ENCODE measurements at regions of chr12 and their contacts with region 1.

Region 1: GRCh38 chr12:64660237-64661018 is 50.1 kb downstream of the RASSF3 start:
- DNase-seq: no peak
- H3K4me3 Mint-ChIP-seq: no peak overlapping the region
- H3K27ac Mint-ChIP-seq: peak overlapping the region; percentile 17
- H3K4me1 Mint-ChIP-seq: peaks cover 54% of the 10 kb centered on the region
- H3K27me3 Mint-ChIP-seq: no peaks in the 10 kb centered on the region

Region 2: GRCh38 chr12:64679487-64679983 is 19.1 kb after region 1 on chr12:
- intact Hi-C with region 1: loop called (anchors 2 kb)
- DNase-seq: peak; percentile 87
- H3K4me3 Mint-ChIP-seq: peak overlapping the region; percentile 63
- H3K27ac Mint-ChIP-seq: peak overlapping the region; percentile 78
- H3K4me1 Mint-ChIP-seq: peaks cover 80% of the 10 kb centered on the region
- H3K27me3 Mint-ChIP-seq: no peaks in the 10 kb centered on the region

Region 3: GRCh38 chr12:64780531-64781279 is 120.3 kb after region 1 on chr12:
- intact Hi-C with region 1: no loop called
- DNase-seq: peak; percentile 69
- H3K4me3 Mint-ChIP-seq: peak overlapping the region; percentile 82
- H3K27ac Mint-ChIP-seq: no peak overlapping the region
- H3K4me1 Mint-ChIP-seq: peaks cover 10% of the 10 kb centered on the region
- H3K27me3 Mint-ChIP-seq: peaks cover 76% of the 10 kb centered on the region